WTC11 (cell line): ENCODE measurements at regions of chr4 and their contacts with region 1.

Region 1: GRCh38 chr4:8547108-8547970 is 32.9 kb upstream of the GPR78 start:
- DNase-seq: peak; percentile 36
- ATAC-seq: peak; percentile 78
- H3K4me3 Mint-ChIP-seq: no peak overlapping the region
- H3K27ac Mint-ChIP-seq: 0 out of 2 replicates have a peak overlapping the region, but pooled peaks have one; percentile 26
- H3K4me1 Mint-ChIP-seq: peaks cover 15% of the 10 kb centered on the region
- H3K27me3 Mint-ChIP-seq: peaks cover 3% of the 10 kb centered on the region; the same call in 1 of the 2 replicates
- CTCF ChIP-seq: peak; percentile 63

Region 2: GRCh38 chr4:8468746-8469535 is 78.4 kb before region 1 on chr4:
- CTCF ChIA-PET with region 1: interaction called, 17 read pairs
- POLR2A ChIA-PET with region 1: no interaction called
- DNase-seq: peak; percentile 89
- ATAC-seq: peak; percentile 94
- H3K4me3 Mint-ChIP-seq: no peak overlapping the region
- H3K27ac Mint-ChIP-seq: 0 out of 2 replicates have a peak overlapping the region, but pooled peaks have one; percentile 24
- H3K4me1 Mint-ChIP-seq: 0 out of 2 replicates have a peak, but pooled peaks cover 2% of the 10 kb centered on the region
- H3K27me3 Mint-ChIP-seq: no peaks in the 10 kb centered on the region
- CTCF ChIP-seq: peak; percentile 76

Region 3: GRCh38 chr4:8495851-8496202 is 51.5 kb before region 1 on chr4:
- CTCF ChIA-PET with region 1: interaction called, 11 read pairs
- POLR2A ChIA-PET with region 1: no interaction called
- DNase-seq: no peak
- ATAC-seq: peak; percentile 23
- H3K4me3 Mint-ChIP-seq: no peak overlapping the region
- H3K27ac Mint-ChIP-seq: no peak overlapping the region; the same call in 1 of the 2 replicates
- H3K4me1 Mint-ChIP-seq: peaks cover 44% of the 10 kb centered on the region
- H3K27me3 Mint-ChIP-seq: peaks cover 3% of the 10 kb centered on the region; the same call in 1 of the 2 replicates
- CTCF ChIP-seq: no peak

Region 4: GRCh38 chr4:8506373-8507188 is 40.8 kb before region 1 on chr4:
- CTCF ChIA-PET with region 1: interaction called, 18 read pairs
- POLR2A ChIA-PET with region 1: no interaction called
- DNase-seq: peak; percentile 49
- ATAC-seq: peak; percentile 85
- H3K4me3 Mint-ChIP-seq: no peak overlapping the region
- H3K27ac Mint-ChIP-seq: no peak overlapping the region
- H3K4me1 Mint-ChIP-seq: peaks cover 26% of the 10 kb centered on the region
- H3K27me3 Mint-ChIP-seq: peaks cover 2% of the 10 kb centered on the region; the same call in 1 of the 2 replicates
- CTCF ChIP-seq: no peak

Region 5: GRCh38 chr4:8594097-8595038 is 47.0 kb after region 1 on chr4:
- CTCF ChIA-PET with region 1: interaction called, 26 read pairs
- POLR2A ChIA-PET with region 1: interaction called, 5 read pairs
- DNase-seq: peak; percentile 70
- ATAC-seq: peak; percentile 35
- H3K4me3 Mint-ChIP-seq: peak overlapping the region; percentile 62
- H3K27ac Mint-ChIP-seq: no peak overlapping the region
- H3K4me1 Mint-ChIP-seq: peaks cover 27% of the 10 kb centered on the region
- H3K27me3 Mint-ChIP-seq: no peaks in the 10 kb centered on the region; the same call in 1 of the 2 replicates
- CTCF ChIP-seq: peak; percentile 32; the same call in 1 of the 2 replicates